ENCODE measurements at regions of chr13 and their contacts with region 1.

Region 1: DNA sequence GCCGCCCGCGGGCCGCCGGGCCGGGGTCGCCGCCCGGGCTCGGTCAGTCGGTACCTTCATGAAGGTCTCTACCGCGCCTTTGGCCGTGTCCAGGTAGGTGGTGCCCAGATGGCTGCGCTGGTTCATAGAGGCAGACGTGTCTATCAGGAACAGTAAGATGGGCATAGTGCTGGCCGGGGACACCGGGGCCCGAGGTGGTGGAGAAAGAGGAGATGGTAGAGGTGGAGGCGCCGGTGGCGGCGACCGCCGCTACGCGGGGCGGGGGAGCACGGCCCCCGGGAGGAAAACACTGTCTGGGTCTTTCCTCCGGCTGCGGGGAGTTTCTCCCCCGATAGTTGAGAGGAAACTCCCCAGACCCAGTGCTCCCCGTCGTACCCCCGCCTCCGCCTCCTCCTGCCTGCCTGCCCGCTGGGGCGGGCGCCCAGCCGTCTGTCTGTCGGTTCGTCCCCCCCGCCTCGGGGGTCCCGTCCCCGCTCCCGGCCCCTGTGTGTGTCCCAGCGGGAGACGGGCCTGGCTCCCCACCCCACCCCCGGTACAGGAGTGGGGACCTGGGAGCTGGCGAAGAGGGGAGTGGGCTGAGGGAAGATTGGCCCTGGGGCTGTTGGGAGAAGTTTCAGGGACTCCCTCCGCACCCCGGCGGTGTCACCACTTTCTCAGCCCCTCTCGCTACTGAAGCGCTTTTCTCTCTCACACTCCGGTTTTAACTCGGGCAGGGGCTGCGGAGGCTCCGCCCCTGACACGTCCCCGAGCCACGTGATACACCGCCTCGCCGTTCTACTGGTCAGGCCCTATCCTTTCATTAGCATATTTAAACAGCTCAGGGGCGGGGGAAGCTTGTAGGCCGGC is at the start of gene INTS6:
- DNase-seq: peak; percentile 100
- ATAC-seq: peak; percentile 95
- total RNA-seq, gene INTS6: 22.7 TPM

Region 2: DNA sequence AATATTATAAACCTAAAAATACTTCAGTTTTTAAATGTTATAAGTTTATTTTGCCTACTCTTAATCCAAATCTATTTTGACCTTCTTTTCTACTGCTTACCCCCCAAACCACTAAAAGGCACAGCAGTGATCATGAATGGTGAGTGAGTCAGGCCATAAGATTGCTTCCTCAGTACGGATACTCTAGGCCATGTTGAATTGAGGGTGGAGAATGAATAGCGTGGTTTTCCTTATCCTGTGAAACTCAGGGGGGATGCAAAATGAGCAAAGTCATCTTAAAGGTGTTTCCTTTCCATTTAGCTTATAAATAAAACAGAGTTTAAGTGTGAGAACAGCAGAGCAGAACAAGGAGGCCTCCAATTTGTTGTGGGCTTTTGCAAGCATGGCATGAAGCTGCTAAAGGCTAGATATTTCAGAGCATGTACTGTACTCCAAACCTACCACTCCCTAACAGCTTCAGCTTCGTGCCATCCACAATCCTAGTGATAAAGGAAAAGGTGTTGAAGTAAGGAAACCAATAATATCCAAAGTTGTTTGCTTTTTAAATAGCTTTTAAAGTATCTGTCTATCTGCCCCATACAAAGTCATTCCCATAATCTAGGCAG is 88.1 kb before region 1 on chr13:
- intact Hi-C with region 1: no loop called
- DNase-seq: no peak
- ATAC-seq: no peak

Region 3: GRCh38 chr13:51385114-51385513 is 67.5 kb before region 1 on chr13:
- intact Hi-C with region 1: no loop called
- DNase-seq: no peak
- ATAC-seq: no peak

Region 4: GRCh38 chr13:51502153-51502651 is 49.6 kb after region 1 on chr13:
- intact Hi-C with region 1: no loop called
- DNase-seq: no peak
- ATAC-seq: no peak

Region 5: GRCh38 chr13:51803422-51804294 is 351.1 kb after region 1 on chr13 and contains the start of gene DHRS12:
- intact Hi-C with region 1: loop called (anchors 2 kb)
- DNase-seq: peak; percentile 97
- ATAC-seq: peak; percentile 89
- total RNA-seq, gene DHRS12: 10.2 TPM